ENCODE measurements at regions of chr6 and their contacts with region 1.

Region 1: GRCh38 chr6:31441365-31442267 is 38.2 kb downstream of the MICA start:
- DNase-seq: peak in 9 of 10 donors; percentile 49 to 81 (median 72)
- H3K4me3 ChIP-seq: peak overlapping the region in 30 of 59 donors; percentile 1 to 53 (median 30)
- H3K27ac ChIP-seq: no peak overlapping the region
- H3K27me3 ChIP-seq: peaks cover 0 to 44% (median 0%) of the 10 kb centered on the region in 45 donors
- CTCF ChIP-seq: peak; percentile 39 to 86 (median 76)

Region 2: DNA sequence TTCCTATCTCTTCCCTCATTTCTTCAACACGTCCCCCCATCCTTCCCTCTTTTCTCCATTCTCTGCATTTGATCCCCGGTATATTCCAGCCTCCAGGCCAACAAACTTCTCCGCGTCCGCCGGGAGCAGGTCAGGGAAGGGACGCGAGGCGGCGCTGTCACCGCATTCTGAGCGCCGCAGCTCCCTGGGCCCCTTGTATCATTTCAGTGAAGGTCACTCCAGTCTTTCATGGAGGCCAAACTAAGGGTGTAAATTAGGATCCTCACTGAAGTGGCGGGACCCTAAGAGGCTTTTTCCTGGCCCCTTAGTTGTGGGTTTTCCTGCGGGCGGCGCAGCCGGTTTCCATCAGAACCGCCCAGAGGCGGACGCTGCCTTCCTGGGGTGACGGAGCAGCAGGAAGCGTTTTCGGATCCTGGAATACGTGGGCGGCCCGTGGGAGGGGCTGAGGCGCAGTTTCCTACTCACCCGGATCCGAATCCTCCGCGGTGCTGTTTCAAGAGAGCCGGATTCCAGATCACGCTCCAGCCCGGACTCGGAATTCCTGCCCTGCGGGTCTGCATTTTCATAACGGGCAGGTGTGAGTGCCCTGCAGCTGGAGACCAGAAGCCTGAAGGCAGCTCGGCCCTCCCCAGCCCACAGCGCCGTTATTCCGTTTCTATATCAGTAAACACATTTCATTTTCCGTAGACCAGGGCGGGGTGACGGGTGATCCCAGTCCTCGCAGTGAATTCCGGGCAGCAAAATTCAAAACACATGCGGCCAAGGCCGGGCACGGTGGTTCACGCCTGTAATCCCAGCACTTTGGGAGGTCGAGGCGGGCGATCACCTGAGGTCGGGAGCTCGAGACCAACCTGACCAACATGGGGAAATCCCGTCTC is 41.8 kb before region 1 on chr6:
- intact Hi-C with region 1: loop called (anchors 5 kb)
- DNase-seq: peak; percentile 55 to 88 (median 78)
- H3K4me3 ChIP-seq: peak overlapping the region; percentile 39 to 80 (median 65)
- H3K27ac ChIP-seq: peak overlapping the region in 58 of 59 donors; percentile 28 to 97 (median 89)
- H3K27me3 ChIP-seq: peaks cover 0 to 75% (median 4%) of the 10 kb centered on the region in 45 donors
- CTCF ChIP-seq: peak; percentile 51 to 84 (median 76)

Measured in dorsolateral prefrontal cortex (tissue), 120 donors.